Activated naive CD4-positive, alpha-beta T cell treated with anti-CD3 and anti-CD28 coated beads for 36 hours (primary cell): ENCODE measurements at regions of chr2 and their contacts with region 1.

Region 1: GRCh38 chr2:70948337-70949003 is 12.8 kb downstream of the ATP6V1B1 start:
- DNase-seq: peak; percentile 87
- H3K4me3 Mint-ChIP-seq: peak overlapping the region; percentile 79
- H3K27ac Mint-ChIP-seq: no peak overlapping the region
- H3K4me1 Mint-ChIP-seq: peaks cover 13% of the 10 kb centered on the region
- H3K27me3 Mint-ChIP-seq: peaks cover 6% of the 10 kb centered on the region

Region 2: GRCh38 chr2:70656421-70657010 is 292.0 kb before region 1 on chr2:
- CTCF ChIA-PET with region 1: interaction called, 5 read pairs
- intact Hi-C with region 1: loop called (anchors 1 kb)
- DNase-seq: peak; percentile 62
- H3K4me3 Mint-ChIP-seq: no peak overlapping the region
- H3K27ac Mint-ChIP-seq: peak overlapping the region; percentile 23
- H3K4me1 Mint-ChIP-seq: peaks cover 20% of the 10 kb centered on the region
- H3K27me3 Mint-ChIP-seq: no peaks in the 10 kb centered on the region

Region 3: GRCh38 chr2:70767699-70768589 is 180.5 kb before region 1 on chr2 and contains the start of gene ADD2:
- CTCF ChIA-PET with region 1: no interaction called
- intact Hi-C with region 1: no loop called
- DNase-seq: peak; percentile 89
- H3K4me3 Mint-ChIP-seq: peak within 1 kb of the TSS; percentile 91
- H3K27ac Mint-ChIP-seq: peak within 1 kb of the TSS; percentile 83
- H3K4me1 Mint-ChIP-seq: peaks cover 8% of the 10 kb centered on the region
- H3K27me3 Mint-ChIP-seq: peaks cover 10% of the 10 kb centered on the region
- total RNA-seq, gene ADD2: 42.9 to 46.2 TPM

Region 4: DNA sequence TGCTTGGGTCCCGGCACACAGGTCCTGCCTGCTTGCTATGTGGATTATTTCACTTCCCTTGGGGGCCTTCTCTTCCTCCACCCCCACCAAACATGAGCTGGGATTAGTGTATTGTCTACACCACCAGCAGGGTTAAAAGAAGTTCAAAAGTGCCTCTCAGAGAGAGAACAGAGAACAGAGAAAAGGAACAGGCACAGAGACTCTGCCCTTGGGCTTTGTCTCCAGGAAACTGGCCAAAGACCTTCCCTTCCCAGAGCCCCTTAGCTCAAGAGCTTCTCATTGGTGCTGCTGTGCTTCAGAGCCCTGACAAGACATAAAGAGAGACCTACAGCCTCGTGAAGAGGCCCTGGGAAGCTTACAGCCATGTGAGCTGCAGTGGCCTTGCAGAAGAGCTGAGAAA is 151.0 kb before region 1 on chr2:
- CTCF ChIA-PET with region 1: interaction called, 14 read pairs
- intact Hi-C with region 1: no loop called
- DNase-seq: no peak
- H3K4me3 Mint-ChIP-seq: no peak overlapping the region
- H3K27ac Mint-ChIP-seq: no peak overlapping the region
- H3K4me1 Mint-ChIP-seq: no peaks in the 10 kb centered on the region
- H3K27me3 Mint-ChIP-seq: peaks cover 4% of the 10 kb centered on the region

Region 5: DNA sequence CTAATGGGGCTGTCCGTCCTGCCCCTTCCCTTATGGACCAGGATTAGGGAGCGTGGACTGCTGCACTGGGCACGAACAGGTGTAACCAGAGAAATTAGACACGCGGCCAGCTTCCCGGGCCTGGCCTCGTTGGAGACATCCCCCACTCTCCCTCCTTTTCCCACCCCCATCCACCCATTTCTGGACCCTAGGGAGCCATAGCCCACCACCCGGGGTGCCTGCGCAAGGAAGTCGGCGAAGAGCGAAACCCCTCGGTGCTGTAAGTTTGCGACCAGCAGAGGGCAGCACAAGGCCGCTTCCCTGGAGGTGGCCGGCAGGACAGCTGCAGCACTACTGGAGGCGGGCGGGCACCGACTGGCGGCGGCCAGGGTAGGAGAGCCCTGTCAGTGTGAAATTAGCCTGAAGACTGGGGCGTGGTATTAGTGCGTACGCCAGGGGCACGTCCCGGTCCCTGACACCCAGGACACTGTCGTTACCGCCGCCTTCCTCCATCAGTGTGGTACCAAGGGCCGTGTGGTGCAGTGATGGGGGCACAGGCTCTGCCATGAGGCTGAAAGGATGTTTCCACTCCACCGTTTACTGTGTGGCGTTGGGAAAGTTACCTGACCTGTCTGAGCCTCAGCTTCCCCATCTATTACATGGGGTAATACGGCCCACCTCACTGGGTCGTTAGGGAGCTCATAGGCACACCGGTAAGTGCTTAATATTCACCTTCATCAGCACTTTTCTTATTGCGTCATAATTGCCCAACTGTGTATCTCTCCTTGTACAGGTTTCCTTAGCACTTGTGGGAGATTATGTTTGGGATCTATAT is 76.9 kb before region 1 on chr2:
- CTCF ChIA-PET with region 1: interaction called, 95 read pairs
- intact Hi-C with region 1: loop called (anchors 1 kb)
- DNase-seq: peak; percentile 90
- H3K4me3 Mint-ChIP-seq: no peak overlapping the region
- H3K27ac Mint-ChIP-seq: no peak overlapping the region
- H3K4me1 Mint-ChIP-seq: peaks cover 5% of the 10 kb centered on the region
- H3K27me3 Mint-ChIP-seq: peaks cover 32% of the 10 kb centered on the region

Region 6: DNA sequence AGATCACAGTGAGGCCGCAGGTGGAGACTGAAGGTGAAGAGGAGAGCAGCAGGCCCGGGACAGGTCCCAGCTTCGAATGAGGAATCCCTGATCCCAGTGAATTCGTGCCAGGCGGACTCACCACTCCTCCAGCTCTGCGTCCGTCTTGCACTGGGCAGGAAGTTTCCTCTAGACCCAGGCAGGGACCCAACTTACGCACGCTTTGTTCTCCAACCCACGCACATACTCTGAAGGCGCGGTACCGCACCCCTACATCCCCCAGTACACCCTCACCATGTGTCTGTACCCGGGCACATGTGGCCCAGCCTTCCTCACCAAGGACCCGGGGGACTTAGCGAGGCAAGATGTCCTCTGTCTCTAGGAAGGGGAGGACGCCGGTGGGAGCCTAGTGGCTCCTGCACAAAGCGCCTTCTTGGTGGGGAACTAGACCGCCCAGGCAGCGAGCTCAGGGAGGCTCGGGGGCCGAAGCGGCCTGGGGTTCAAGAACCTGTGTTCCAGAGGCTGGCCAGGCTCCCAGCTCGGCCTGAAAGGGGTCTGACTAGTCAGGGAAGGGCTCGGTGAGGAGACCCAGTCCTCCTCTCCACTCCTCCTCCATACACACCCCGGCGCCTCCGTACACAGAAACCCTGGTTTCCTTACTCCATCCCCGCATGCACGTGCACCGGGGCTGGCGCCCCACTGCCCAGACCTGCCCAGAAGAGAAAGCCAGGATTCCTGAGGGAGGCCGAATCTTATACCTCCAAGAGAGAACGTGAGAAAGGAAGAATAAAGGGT is 51.1 kb before region 1 on chr2:
- CTCF ChIA-PET with region 1: no interaction called
- intact Hi-C with region 1: no loop called
- DNase-seq: no peak
- H3K4me3 Mint-ChIP-seq: no peak overlapping the region
- H3K27ac Mint-ChIP-seq: no peak overlapping the region
- H3K4me1 Mint-ChIP-seq: peaks cover 33% of the 10 kb centered on the region
- H3K27me3 Mint-ChIP-seq: peaks cover 81% of the 10 kb centered on the region

Region 7: DNA sequence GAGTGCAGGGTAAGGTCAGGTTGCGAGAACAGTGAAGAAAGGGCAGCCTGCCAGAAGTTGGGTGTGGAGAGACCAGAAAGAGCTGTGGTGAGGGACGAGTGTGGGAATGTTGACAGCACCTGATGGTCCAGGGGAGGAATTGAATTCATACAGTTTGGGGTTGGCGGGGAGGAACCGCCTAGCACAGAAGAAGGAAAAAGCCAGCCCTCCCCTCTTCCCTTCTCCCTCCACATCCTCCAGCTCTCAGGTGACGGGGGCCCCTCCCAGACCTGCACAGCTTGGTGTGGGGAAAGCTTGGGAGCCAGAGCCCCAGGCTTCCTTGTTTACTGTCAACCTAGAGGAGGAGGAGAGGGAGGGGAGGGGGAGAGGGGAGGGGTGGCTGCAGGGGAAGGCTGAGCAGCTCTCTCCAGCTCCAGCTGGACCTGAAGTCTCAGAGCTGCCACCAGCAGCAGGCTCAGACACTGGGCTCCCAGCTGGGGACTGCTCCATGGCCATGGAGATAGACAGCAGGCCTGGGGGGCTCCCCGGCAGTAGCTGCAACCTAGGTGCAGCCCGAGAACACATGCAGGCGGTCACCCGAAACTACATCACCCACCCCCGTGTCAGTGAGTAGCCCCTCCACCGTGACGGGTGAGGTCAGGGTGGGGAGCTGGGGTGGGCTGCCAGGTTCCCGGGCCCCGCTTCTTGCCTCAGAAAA is 12.9 kb before region 1 on chr2 and contains the start of gene ATP6V1B1:
- CTCF ChIA-PET with region 1: interaction called, 24 read pairs
- intact Hi-C with region 1: no loop called
- DNase-seq: no peak
- H3K4me3 Mint-ChIP-seq: no peak within 1 kb of the TSS
- H3K27ac Mint-ChIP-seq: no peak within 1 kb of the TSS
- H3K4me1 Mint-ChIP-seq: no peaks in the 10 kb centered on the region
- H3K27me3 Mint-ChIP-seq: peaks cover 4% of the 10 kb centered on the region
- total RNA-seq, gene ATP6V1B1: not detected

Region 8: DNA sequence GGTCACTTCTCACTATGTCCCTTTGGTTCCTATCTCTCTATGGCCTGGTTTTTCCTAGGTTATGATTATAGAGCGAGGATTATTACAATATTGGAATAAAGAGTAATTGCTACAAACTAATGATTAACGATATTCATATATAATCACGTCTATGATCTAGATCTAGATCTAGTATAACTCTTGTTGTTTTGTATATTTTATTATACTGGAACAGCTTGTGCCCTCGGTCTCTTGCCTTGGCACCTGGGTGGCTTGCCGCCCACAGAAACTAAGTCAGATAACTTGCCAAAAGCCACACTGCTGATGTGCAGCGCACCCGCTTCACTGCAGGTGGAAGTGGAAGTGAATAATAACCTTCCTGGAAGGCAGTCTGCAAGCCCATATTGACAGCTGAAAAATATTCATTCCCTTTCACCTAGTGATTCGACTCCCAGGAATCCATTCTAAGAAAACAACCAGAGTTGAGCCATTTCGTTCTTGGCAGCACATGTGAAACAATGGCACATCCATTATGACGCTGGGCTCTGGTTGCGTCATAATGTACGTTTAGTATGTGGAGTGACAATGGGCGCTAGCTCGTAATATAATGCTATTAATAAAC is 29.2 kb after region 1 on chr2:
- CTCF ChIA-PET with region 1: interaction called, 13 read pairs
- intact Hi-C with region 1: loop called (anchors 2 kb)
- DNase-seq: peak; percentile 63
- H3K4me3 Mint-ChIP-seq: peak overlapping the region; percentile 72
- H3K27ac Mint-ChIP-seq: no peak overlapping the region
- H3K4me1 Mint-ChIP-seq: peaks cover 13% of the 10 kb centered on the region
- H3K27me3 Mint-ChIP-seq: no peaks in the 10 kb centered on the region

Region 9: DNA sequence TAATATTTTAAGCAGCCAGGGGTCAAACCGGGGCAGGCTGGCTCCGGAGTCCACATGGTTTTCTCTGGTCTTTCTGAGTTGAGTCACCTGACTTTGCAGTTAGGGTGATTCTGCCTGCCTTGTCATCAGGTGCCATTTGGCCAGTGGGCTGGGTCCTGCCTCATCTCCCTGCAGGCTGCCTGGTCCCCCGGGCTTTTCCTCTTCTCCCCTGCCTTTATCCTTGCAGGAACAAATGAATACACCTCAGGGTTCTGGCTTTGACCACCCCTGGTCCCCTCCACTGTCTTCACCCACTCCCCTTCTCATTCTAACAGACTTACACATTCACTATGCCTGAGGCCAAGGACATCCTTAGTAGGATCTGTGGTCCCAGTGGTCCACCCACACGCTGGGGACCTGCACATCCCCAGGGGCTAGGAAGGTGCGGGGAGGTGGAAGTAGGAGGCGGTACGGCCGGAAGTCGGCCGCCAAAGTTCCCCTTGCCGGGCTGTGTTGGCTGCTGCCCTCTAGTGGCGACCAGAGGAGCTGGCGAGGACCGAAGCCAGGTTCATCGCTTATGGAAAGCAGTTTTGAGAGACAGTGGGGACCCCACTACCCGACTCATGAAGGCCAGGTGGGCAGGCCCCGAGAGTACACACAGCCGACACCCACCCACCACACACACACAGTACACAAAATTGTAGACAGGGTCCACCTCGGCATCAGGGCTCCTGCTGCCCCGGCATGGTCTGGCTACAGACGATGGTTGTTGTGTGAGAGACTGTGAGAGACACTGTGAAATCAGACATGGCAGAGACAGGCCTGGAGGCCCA is 52.5 kb after region 1 on chr2:
- CTCF ChIA-PET with region 1: interaction called, 10 read pairs
- intact Hi-C with region 1: no loop called
- DNase-seq: peak; percentile 91
- H3K4me3 Mint-ChIP-seq: peak overlapping the region; percentile 73
- H3K27ac Mint-ChIP-seq: peak overlapping the region; percentile 63
- H3K4me1 Mint-ChIP-seq: peaks cover 16% of the 10 kb centered on the region
- H3K27me3 Mint-ChIP-seq: no peaks in the 10 kb centered on the region

Region 10: GRCh38 chr2:71243634-71244304 is 295.3 kb after region 1 on chr2:
- CTCF ChIA-PET with region 1: no interaction called
- intact Hi-C with region 1: no loop called
- DNase-seq: no peak
- H3K4me3 Mint-ChIP-seq: no peak overlapping the region
- H3K27ac Mint-ChIP-seq: no peak overlapping the region
- H3K4me1 Mint-ChIP-seq: no peaks in the 10 kb centered on the region
- H3K27me3 Mint-ChIP-seq: peaks cover 12% of the 10 kb centered on the region

Region 11: GRCh38 chr2:71323386-71323785 is 374.9 kb after region 1 on chr2:
- CTCF ChIA-PET with region 1: no interaction called
- intact Hi-C with region 1: no loop called
- DNase-seq: no peak
- H3K4me3 Mint-ChIP-seq: no peak overlapping the region
- H3K27ac Mint-ChIP-seq: no peak overlapping the region
- H3K4me1 Mint-ChIP-seq: no peaks in the 10 kb centered on the region
- H3K27me3 Mint-ChIP-seq: no peaks in the 10 kb centered on the region